ENCODE measurements at regions of chr4 and their contacts with region 1.

Region 1: GRCh38 chr4:173318648-173319211 is 15.4 kb downstream of the HMGB2 start:
- DNase-seq: peak; percentile 53
- ATAC-seq: no peak
- H3K4me3 ChIP-seq: no peak overlapping the region
- H3K4me3 Mint-ChIP-seq: no peak overlapping the region
- H3K27ac ChIP-seq: no peak overlapping the region
- H3K27ac Mint-ChIP-seq: no peak overlapping the region
- H3K4me1 ChIP-seq: no peaks in the 10 kb centered on the region
- H3K4me1 Mint-ChIP-seq: no peaks in the 10 kb centered on the region
- H3K27me3 ChIP-seq: no peaks in the 10 kb centered on the region
- H3K27me3 Mint-ChIP-seq: no peaks in the 10 kb centered on the region
- CTCF ChIP-seq: peak; percentile 75

Region 2: DNA sequence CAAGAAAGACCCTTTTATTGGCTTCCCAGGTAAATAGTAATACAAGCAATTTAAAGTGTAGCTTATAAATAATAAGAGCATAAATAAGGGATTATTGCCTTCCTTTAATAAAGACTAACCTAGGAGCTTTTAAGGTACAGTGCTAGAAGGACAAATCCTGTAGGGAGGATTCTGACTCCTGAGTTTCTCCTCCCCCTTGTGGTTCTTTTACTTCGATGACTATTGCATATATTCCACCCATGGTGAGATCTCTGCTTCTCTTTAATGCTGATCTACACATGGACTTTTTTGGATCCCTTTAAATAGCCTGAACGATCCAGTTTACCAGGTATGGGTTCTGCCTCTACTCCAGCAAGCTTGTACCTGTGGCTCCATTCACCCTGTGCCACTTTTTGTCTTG is 147.6 kb before region 1 on chr4:
- CTCF ChIA-PET with region 1: no interaction called
- POLR2A ChIA-PET with region 1: no interaction called
- intact Hi-C with region 1: no loop called
- DNase-seq: peak; percentile 20
- ATAC-seq: no peak
- H3K4me3 ChIP-seq: no peak overlapping the region
- H3K4me3 Mint-ChIP-seq: peak overlapping the region; percentile 89
- H3K27ac ChIP-seq: no peak overlapping the region
- H3K27ac Mint-ChIP-seq: peak overlapping the region; percentile 89
- H3K4me1 ChIP-seq: peaks cover 40 to 48% of the 10 kb centered on the region in 2 donors
- H3K4me1 Mint-ChIP-seq: peaks cover 60% of the 10 kb centered on the region
- H3K27me3 ChIP-seq: no peaks in the 10 kb centered on the region
- H3K27me3 Mint-ChIP-seq: no peaks in the 10 kb centered on the region
- CTCF ChIP-seq: peak; percentile 15

Region 3: GRCh38 chr4:173301518-173302201 is 17.1 kb before region 1 on chr4:
- CTCF ChIA-PET with region 1: interaction called, 15 read pairs
- POLR2A ChIA-PET with region 1: no interaction called
- intact Hi-C with region 1: no loop called
- DNase-seq: peak; percentile 34
- ATAC-seq: no peak
- H3K4me3 ChIP-seq: no peak overlapping the region
- H3K4me3 Mint-ChIP-seq: no peak overlapping the region
- H3K27ac ChIP-seq: no peak overlapping the region
- H3K27ac Mint-ChIP-seq: no peak overlapping the region
- H3K4me1 ChIP-seq: no peaks in the 10 kb centered on the region
- H3K4me1 Mint-ChIP-seq: peaks cover 2% of the 10 kb centered on the region
- H3K27me3 ChIP-seq: no peaks in the 10 kb centered on the region
- H3K27me3 Mint-ChIP-seq: no peaks in the 10 kb centered on the region
- CTCF ChIP-seq: peak; percentile 85

Region 4: GRCh38 chr4:173420324-173420752 is 101.6 kb after region 1 on chr4:
- CTCF ChIA-PET with region 1: interaction called, 307 read pairs
- POLR2A ChIA-PET with region 1: no interaction called
- intact Hi-C with region 1: loop called (anchors 1 kb)
- DNase-seq: peak; percentile 19
- ATAC-seq: no peak
- H3K4me3 ChIP-seq: no peak overlapping the region
- H3K4me3 Mint-ChIP-seq: no peak overlapping the region
- H3K27ac ChIP-seq: no peak overlapping the region
- H3K27ac Mint-ChIP-seq: no peak overlapping the region
- H3K4me1 ChIP-seq: peaks cover 0 to 6% of the 10 kb centered on the region in 2 donors
- H3K4me1 Mint-ChIP-seq: peaks cover 7% of the 10 kb centered on the region
- H3K27me3 ChIP-seq: no peaks in the 10 kb centered on the region
- H3K27me3 Mint-ChIP-seq: peaks cover 2% of the 10 kb centered on the region
- CTCF ChIP-seq: peak; percentile 55

Region 5: GRCh38 chr4:174120446-174121295 is 801.9 kb after region 1 on chr4:
- CTCF ChIA-PET with region 1: interaction called, 3 read pairs
- POLR2A ChIA-PET with region 1: no interaction called
- intact Hi-C with region 1: loop called (anchors 10 kb)
- DNase-seq: peak; percentile 15
- ATAC-seq: no peak
- H3K4me3 ChIP-seq: no peak overlapping the region
- H3K4me3 Mint-ChIP-seq: peak overlapping the region; percentile 40
- H3K27ac ChIP-seq: no peak overlapping the region
- H3K27ac Mint-ChIP-seq: no peak overlapping the region
- H3K4me1 ChIP-seq: no peaks in the 10 kb centered on the region
- H3K4me1 Mint-ChIP-seq: peaks cover 5% of the 10 kb centered on the region
- H3K27me3 ChIP-seq: peaks cover 0 to 12% (median 2%) of the 10 kb centered on the region in 4 experiments
- H3K27me3 Mint-ChIP-seq: peaks cover 35% of the 10 kb centered on the region
- CTCF ChIP-seq: peak; percentile 48

Measured in B cell (primary cell).